Dorsolateral prefrontal cortex (tissue), 120 donors: ENCODE measurements at regions of chr3 and their contacts with region 1.

Region 1: GRCh38 chr3:159907828-159908227 is 80.8 kb upstream of the IL12A start:
- DNase-seq: no peak
- H3K4me3 ChIP-seq: no peak overlapping the region
- H3K27ac ChIP-seq: peak overlapping the region in 21 of 59 donors; percentile 1 to 71 (median 30)
- H3K27me3 ChIP-seq: no peaks in the 10 kb centered on the region
- CTCF ChIP-seq: no peak

Region 2: DNA sequence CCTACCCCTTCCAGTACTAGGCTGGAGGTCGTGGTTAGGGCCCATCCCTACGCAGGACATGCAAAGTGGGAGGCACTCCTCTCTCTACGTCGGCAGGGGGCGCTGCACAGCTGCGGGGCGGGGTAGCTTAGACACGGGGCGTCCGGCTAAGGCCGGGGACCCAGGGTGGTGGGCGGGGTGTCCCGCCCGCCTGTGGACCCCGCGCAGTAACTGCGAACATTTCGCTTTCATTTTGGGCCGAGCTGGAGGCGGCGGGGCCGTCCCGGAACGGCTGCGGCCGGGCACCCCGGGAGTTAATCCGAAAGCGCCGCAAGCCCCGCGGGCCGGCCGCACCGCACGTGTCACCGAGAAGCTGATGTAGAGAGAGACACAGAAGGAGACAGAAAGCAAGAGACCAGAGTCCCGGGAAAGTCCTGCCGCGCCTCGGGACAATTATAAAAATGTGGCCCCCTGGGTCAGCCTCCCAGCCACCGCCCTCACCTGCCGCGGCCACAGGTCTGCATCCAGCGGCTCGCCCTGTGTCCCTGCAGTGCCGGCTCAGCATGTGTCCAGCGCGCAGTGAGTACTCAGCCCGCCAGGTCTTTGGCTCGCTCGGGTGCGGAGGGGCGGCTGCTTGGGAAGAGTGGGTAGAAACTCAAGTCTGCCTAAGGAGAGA is 80.9 kb after region 1 on chr3 and contains the start of gene IL12A:
- intact Hi-C with region 1: loop called in 1 of 2 experiments (anchors 5 kb)
- DNase-seq: peak; percentile 49 to 83 (median 70)
- H3K4me3 ChIP-seq: peak within 1 kb of the TSS; percentile 54 to 97 (median 79)
- H3K27ac ChIP-seq: peak within 1 kb of the TSS in 21 of 59 donors; percentile 2 to 84 (median 45)
- H3K27me3 ChIP-seq: no peaks in the 10 kb centered on the region
- CTCF ChIP-seq: peak; percentile 68 to 95 (median 88)
- total RNA-seq, gene IL12A: 0.38 to 6.5 (median 1.4) TPM in 115 of 120 experiments, not detected in the others